Esophagus squamous epithelium (tissue), 5 donors: ENCODE measurements at regions of chr5 and their contacts with region 1.

Region 1: DNA sequence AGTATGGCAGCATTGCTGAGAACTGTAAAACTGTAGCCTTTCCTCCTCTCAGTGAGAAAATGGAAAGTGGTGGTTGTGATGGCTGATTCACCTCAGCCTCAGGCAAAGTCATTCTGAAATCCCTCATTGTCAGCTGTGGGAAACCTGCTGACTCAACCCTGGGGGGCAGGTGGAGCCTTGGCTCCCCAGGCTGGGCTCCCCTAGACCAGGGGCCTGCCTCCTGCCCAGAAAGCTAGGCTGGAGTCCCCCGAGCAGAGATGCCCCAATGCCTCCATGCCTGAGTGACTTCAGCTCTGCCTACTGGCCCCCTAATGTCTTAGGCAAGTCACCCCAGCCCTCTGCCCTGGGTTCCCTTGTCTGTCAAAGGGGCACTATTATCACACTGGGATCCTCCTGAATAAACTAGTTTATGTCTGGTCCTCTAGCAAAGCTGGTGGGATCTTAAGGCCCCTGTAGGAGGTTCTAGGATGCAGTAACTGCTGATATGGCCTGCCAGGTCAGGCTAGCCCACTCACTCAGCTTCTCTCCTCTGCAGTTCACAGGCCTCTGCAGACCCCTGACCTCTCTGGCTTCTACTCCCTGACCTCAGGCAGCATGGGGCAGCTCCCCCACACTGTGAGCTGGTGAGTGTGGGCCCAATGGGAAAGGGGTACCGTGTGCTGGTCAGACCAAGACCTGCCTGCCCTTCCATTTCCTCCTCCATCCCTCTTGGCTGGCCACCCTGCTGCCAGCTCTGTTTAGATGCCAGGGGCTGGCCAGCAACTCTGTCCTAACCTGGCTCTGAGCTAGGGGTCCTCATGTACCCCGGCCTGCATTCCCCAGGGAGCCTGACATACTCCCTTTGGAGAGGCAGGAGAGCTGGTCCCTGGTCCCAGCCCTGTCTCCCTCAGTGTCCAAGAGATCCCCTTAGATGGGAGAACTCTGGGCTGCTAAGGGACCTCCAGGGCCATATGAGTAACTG is 24.2 kb downstream of the TCF7 start:
- DNase-seq: no peak
- H3K4me3 ChIP-seq: no peak overlapping the region
- H3K27ac ChIP-seq: no peak overlapping the region
- H3K4me1 ChIP-seq: peaks cover 7 to 46% (median 10%) of the 10 kb centered on the region in 3 donors
- H3K27me3 ChIP-seq: no peaks in the 10 kb centered on the region
- CTCF ChIP-seq: no peak
- POLR2A ChIP-seq: no peak

Region 2: GRCh38 chr5:133396814-133397213 is 741.9 kb before region 1 on chr5:
- intact Hi-C with region 1: no loop called
- DNase-seq: no peak
- H3K4me3 ChIP-seq: no peak overlapping the region
- H3K27ac ChIP-seq: no peak overlapping the region
- H3K4me1 ChIP-seq: no peaks in the 10 kb centered on the region
- H3K27me3 ChIP-seq: no peaks in the 10 kb centered on the region
- CTCF ChIP-seq: no peak
- POLR2A ChIP-seq: no peak

Region 3: GRCh38 chr5:133825631-133826289 is 312.9 kb before region 1 on chr5:
- intact Hi-C with region 1: no loop called
- DNase-seq: no peak
- H3K4me3 ChIP-seq: no peak overlapping the region
- H3K27ac ChIP-seq: no peak overlapping the region
- H3K4me1 ChIP-seq: peaks cover 0 to 11% (median 11%) of the 10 kb centered on the region in 3 donors
- H3K27me3 ChIP-seq: peaks cover 0 to 67% (median 0%) of the 10 kb centered on the region in 4 donors
- CTCF ChIP-seq: no peak
- POLR2A ChIP-seq: no peak

Region 4: DNA sequence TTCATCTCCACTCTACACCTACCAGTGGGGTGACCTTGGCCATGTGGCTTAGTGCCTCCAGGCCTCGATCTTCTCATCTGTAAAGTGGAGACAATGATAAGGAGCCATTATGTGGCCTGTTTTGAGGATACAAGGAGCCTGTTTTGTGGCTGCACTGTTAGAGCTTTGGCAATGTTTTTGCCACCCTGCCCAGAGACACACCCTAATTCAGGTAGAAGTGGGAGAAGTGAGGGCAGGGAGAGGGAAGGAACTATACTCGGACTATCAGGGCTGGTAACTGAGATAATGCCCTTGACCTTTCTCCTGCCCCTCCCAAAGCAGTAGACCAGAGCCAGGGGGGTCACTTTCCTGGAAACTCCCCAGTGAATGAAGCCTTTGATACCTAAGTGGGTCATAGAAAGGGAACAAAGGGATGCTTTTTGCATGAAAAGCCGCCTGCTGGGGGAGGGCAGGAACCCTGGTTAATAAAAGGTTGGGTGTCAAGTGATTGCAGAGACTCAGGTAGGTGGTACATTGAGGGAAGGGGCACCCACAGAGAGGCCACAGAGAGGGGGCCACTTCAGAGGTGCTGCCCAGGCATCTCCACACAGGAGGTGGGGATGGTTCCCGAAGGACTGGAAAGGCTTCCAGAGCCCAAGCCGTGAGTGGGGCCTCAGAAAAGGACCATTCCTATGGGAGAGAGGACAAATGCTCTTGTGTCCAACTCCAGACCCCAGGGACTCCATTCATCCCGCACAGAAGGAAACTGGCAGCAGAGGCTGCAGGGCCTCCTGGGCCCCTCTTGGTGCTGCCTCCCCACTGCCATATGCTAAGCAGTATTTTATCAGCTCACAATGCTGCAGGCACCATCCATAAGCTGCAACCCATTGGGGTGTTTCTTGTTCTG is 91.7 kb before region 1 on chr5:
- intact Hi-C with region 1: no loop called
- DNase-seq: no peak
- H3K4me3 ChIP-seq: no peak overlapping the region
- H3K27ac ChIP-seq: no peak overlapping the region
- H3K4me1 ChIP-seq: no peaks in the 10 kb centered on the region
- H3K27me3 ChIP-seq: no peaks in the 10 kb centered on the region
- CTCF ChIP-seq: no peak
- POLR2A ChIP-seq: no peak

Region 5: DNA sequence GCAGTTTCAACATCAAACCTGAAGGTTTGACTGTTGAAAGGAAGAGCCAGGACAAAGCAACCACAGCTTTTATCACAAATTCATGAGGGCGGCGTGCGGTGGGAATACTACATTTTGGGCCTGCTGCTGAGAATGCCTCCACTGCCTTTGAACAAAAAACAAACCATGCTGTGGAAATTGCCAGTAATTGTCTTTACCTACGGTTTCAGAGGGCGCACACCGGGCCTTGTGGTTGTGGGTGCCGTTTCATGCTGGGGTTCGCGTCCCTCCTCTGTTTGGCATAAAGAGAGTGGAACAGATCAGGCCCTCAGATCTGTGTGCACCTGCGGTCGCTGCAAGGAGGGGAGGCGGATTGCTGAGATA is 51.8 kb before region 1 on chr5:
- intact Hi-C with region 1: no loop called
- DNase-seq: no peak
- H3K4me3 ChIP-seq: no peak overlapping the region
- H3K27ac ChIP-seq: no peak overlapping the region
- H3K4me1 ChIP-seq: peaks cover 0 to 18% (median 0%) of the 10 kb centered on the region in 3 donors
- H3K27me3 ChIP-seq: peaks cover 0 to 14% (median 0%) of the 10 kb centered on the region in 4 donors
- CTCF ChIP-seq: no peak
- POLR2A ChIP-seq: no peak

Region 6: DNA sequence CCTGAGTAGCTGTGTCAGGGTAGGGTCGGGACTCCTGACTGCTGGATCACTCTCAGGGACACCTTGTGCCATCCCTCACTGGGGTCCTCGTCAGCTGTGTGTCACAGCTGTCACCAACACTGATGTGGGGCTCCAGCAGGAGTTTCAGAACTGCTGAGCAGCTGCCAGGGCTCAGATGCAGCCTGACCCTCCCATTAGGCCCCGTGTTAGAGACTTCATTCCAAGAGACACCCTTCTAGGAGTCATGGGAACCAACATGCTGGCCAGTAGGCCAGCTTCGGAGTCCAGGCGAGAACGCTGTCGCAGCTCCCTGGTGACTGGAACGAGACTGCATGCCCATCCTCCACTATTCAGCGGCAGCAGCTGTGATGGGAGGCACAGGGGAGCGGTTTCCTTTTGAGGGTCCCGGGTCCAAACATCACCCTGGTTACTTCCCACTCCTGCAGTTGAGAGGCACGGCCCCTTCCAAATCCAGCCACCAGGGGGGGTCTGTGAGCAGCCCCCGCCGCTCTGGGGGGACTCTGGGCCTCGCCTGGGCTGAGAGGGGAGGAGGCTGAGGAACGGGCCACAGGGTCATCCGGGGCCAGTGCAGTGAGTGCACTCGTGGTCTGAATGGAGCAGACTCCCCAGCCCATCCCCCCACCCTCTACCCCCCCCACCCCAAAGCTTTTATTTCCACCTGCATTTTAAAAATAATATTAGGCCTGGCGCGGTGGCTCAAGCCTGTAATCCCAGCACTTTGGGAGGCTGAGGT is 36.8 kb before region 1 on chr5:
- intact Hi-C with region 1: loop called (anchors 5 kb)
- DNase-seq: no peak
- H3K4me3 ChIP-seq: no peak overlapping the region
- H3K27ac ChIP-seq: no peak overlapping the region
- H3K4me1 ChIP-seq: peaks cover 9 to 26% (median 14%) of the 10 kb centered on the region in 3 donors
- H3K27me3 ChIP-seq: peaks cover 0 to under 1% (median 0%) of the 10 kb centered on the region in 4 donors
- CTCF ChIP-seq: peak; percentile 58 to 84 (median 76)
- POLR2A ChIP-seq: no peak